ENCODE measurements at regions of chr14 and their contacts with region 1.

Region 1: DNA sequence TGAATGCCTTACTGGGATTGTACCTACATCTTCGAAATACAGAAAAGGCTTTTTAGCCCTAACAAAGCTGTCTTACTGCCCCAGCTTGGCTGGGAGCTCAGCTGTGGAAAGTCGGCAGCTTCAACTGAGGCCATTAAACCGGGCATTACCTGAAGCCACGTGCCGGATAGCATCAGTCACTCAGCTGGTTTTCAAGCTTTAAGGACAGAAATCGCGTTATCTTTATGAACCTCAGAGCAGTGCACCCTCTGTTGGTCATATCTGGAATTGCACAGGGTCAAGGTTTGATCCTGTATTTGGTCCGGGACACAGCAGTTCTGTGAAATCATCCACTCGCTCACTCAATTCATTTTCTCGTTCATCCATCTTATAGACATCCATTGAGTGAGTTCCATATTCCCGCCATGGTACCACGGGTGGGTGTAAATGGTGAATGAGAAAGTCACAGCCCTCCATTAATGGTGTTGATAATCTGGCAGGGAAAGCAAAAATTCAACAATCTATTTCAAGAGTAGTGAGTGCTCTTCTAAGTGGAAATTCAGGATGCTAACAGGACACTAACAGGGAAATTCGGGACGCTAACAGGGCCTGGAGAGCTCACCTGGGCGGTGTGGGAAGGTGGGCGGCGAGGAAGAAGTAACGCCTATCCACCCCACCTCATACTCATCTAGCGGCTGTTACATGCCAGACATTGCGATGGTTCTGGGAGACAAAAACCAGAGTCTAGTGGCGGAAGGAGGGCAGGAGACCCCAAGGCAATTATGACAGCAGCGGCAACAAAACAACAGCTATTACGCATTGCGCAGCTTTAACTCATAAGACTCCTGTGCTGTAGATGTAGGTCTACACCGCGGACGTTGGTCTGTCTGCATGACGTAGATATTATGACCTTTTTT is 60.6 kb upstream of the TCL1A start:
- DNase-seq: peak; percentile 41
- ATAC-seq: peak; percentile 70
- H3K4me3 Mint-ChIP-seq: no peak overlapping the region
- H3K27ac Mint-ChIP-seq: no peak overlapping the region
- H3K4me1 Mint-ChIP-seq: peaks cover 21% of the 10 kb centered on the region
- H3K27me3 Mint-ChIP-seq: peaks cover 2% of the 10 kb centered on the region
- CTCF ChIP-seq: peak; percentile 76

Region 2: DNA sequence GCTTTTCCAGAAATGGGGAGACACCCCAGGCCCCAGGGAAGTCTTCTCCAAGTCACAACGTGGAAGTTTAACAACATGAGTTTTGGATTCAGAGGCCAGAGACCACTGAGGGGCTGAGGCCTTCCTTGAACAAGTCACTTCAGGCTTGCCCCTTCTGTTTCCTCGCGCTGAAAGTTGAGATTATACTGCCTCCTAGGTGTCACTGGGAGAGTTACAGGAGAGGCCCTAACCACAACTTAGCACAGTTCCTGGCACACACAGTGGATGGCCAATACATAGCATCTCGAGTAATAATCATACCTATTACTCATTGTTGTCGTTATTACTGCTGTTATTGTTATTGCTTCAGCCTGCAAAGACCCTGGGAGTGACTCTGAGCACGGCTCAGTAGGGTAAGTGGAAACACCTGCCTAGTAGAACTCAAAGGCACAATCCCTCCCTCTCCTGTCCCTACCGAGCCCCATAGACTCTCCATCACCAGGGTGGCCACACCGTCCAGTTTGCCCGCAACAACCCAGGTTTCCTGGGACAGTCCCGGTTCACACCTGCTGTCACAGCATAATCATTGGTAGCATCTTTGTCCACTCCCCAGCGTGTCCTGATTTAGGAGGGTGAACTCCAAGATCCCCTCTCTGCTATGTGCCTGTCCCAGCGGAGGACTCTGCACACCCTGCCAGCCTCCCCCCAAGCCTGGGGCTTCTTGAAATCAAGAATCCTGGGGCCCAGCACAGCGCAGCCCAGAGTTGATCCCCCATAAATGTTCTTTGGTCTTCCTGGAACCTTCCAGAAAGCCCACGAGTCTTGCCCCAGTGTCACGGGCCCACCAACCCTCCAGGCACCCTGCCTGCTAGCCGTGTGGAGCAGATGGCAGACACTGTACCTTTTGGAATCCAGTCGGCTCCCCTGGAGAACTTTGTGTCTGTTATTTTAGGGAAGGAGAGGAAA is 343.0 kb before region 1 on chr14:
- CTCF ChIA-PET with region 1: interaction called, 6 read pairs
- POLR2A ChIA-PET with region 1: no interaction called
- intact Hi-C with region 1: loop called (anchors 1 kb)
- DNase-seq: no peak
- ATAC-seq: peak; percentile 65
- H3K4me3 Mint-ChIP-seq: no peak overlapping the region
- H3K27ac Mint-ChIP-seq: no peak overlapping the region
- H3K4me1 Mint-ChIP-seq: peaks cover 3% of the 10 kb centered on the region
- H3K27me3 Mint-ChIP-seq: no peaks in the 10 kb centered on the region
- CTCF ChIP-seq: no peak

Region 3: GRCh38 chr14:95561001-95561412 is 213.5 kb before region 1 on chr14:
- CTCF ChIA-PET with region 1: interaction called, 44 read pairs
- POLR2A ChIA-PET with region 1: no interaction called
- intact Hi-C with region 1: loop called (anchors 1 kb)
- DNase-seq: peak; percentile 79
- ATAC-seq: peak; percentile 100
- H3K4me3 Mint-ChIP-seq: no peak overlapping the region
- H3K27ac Mint-ChIP-seq: no peak overlapping the region
- H3K4me1 Mint-ChIP-seq: peaks cover 4% of the 10 kb centered on the region
- H3K27me3 Mint-ChIP-seq: peaks cover 17% of the 10 kb centered on the region
- CTCF ChIP-seq: peak; percentile 71

Region 4: GRCh38 chr14:95577875-95578274 is 196.6 kb before region 1 on chr14:
- CTCF ChIA-PET with region 1: no interaction called
- POLR2A ChIA-PET with region 1: no interaction called
- intact Hi-C with region 1: no loop called
- DNase-seq: no peak
- ATAC-seq: no peak
- H3K4me3 Mint-ChIP-seq: no peak overlapping the region
- H3K27ac Mint-ChIP-seq: no peak overlapping the region
- H3K4me1 Mint-ChIP-seq: peaks cover 26% of the 10 kb centered on the region
- H3K27me3 Mint-ChIP-seq: peaks cover 44% of the 10 kb centered on the region
- CTCF ChIP-seq: no peak

Region 5: GRCh38 chr14:95662376-95663186 is 111.9 kb before region 1 on chr14:
- CTCF ChIA-PET with region 1: interaction called, 26 read pairs
- POLR2A ChIA-PET with region 1: interaction called, 3 read pairs
- intact Hi-C with region 1: no loop called
- DNase-seq: no peak
- ATAC-seq: peak; percentile 16
- H3K4me3 Mint-ChIP-seq: peak overlapping the region; percentile 45
- H3K27ac Mint-ChIP-seq: peak overlapping the region; percentile 90
- H3K4me1 Mint-ChIP-seq: peaks cover 92% of the 10 kb centered on the region
- H3K27me3 Mint-ChIP-seq: peaks cover 29% of the 10 kb centered on the region
- CTCF ChIP-seq: no peak

Region 6: GRCh38 chr14:95713596-95714371 is 60.7 kb before region 1 on chr14 and contains the start of gene TCL1A:
- CTCF ChIA-PET with region 1: interaction called, 13 read pairs
- POLR2A ChIA-PET with region 1: interaction called, 20 read pairs
- intact Hi-C with region 1: loop called (anchors 1 kb)
- DNase-seq: peak; percentile 66
- ATAC-seq: peak; percentile 76
- H3K4me3 Mint-ChIP-seq: peak within 1 kb of the TSS; percentile 94
- H3K27ac Mint-ChIP-seq: peak within 1 kb of the TSS; percentile 97
- H3K4me1 Mint-ChIP-seq: peaks cover 80% of the 10 kb centered on the region
- H3K27me3 Mint-ChIP-seq: peaks cover 23% of the 10 kb centered on the region
- CTCF ChIP-seq: no peak
- total RNA-seq, gene TCL1A: 228 and 234 TPM in 2 replicates

Region 7: GRCh38 chr14:95876761-95877538 is 102.4 kb after region 1 on chr14 and contains the start of gene TUNAR:
- CTCF ChIA-PET with region 1: no interaction called
- POLR2A ChIA-PET with region 1: no interaction called
- intact Hi-C with region 1: no loop called
- DNase-seq: no peak
- ATAC-seq: no peak
- H3K4me3 Mint-ChIP-seq: peak within 1 kb of the TSS; percentile 72
- H3K27ac Mint-ChIP-seq: no peak within 1 kb of the TSS
- H3K4me1 Mint-ChIP-seq: peaks cover 3% of the 10 kb centered on the region
- H3K27me3 Mint-ChIP-seq: peaks cover 37% of the 10 kb centered on the region
- CTCF ChIP-seq: no peak
- total RNA-seq, gene TUNAR: 0.40 and 0.61 TPM in 2 replicates

Region 8: GRCh38 chr14:95993768-95994592 is 219.5 kb after region 1 on chr14:
- CTCF ChIA-PET with region 1: interaction called, 13 read pairs
- POLR2A ChIA-PET with region 1: no interaction called
- intact Hi-C with region 1: loop called (anchors 1 kb)
- DNase-seq: no peak
- ATAC-seq: peak; percentile 37
- H3K4me3 Mint-ChIP-seq: no peak overlapping the region
- H3K27ac Mint-ChIP-seq: no peak overlapping the region
- H3K4me1 Mint-ChIP-seq: no peaks in the 10 kb centered on the region
- H3K27me3 Mint-ChIP-seq: peaks cover 24% of the 10 kb centered on the region
- CTCF ChIP-seq: peak; percentile 83

Measured in activated B cell treated with CpG ODN at 0.5 μM for 24 hours (primary cell).